ENCODE measurements at regions of chr2 and their contacts with region 1.

Region 1: GRCh38 chr2:96152301-96153165 is 7.3 kb upstream of the DUSP2 start:
- DNase-seq: no peak
- ATAC-seq: no peak
- H3K4me3 Mint-ChIP-seq: no peak overlapping the region
- H3K27ac Mint-ChIP-seq: peak overlapping the region; percentile 54
- H3K4me1 Mint-ChIP-seq: peaks cover 58% of the 10 kb centered on the region
- H3K27me3 Mint-ChIP-seq: peaks cover 6% of the 10 kb centered on the region

Region 2: GRCh38 chr2:96129528-96130120 is 22.9 kb before region 1 on chr2:
- POLR2A ChIA-PET with region 1: no interaction called
- DNase-seq: no peak
- ATAC-seq: no peak
- H3K4me3 Mint-ChIP-seq: no peak overlapping the region
- H3K27ac Mint-ChIP-seq: no peak overlapping the region
- H3K4me1 Mint-ChIP-seq: peaks cover 6% of the 10 kb centered on the region
- H3K27me3 Mint-ChIP-seq: no peaks in the 10 kb centered on the region

Region 3: GRCh38 chr2:96164459-96165184 is 12.1 kb after region 1 on chr2:
- POLR2A ChIA-PET with region 1: interaction called, 89 read pairs
- DNase-seq: peak; percentile 74
- ATAC-seq: peak; percentile 86
- H3K4me3 Mint-ChIP-seq: peak overlapping the region; percentile 80
- H3K27ac Mint-ChIP-seq: peak overlapping the region; percentile 99
- H3K4me1 Mint-ChIP-seq: peaks cover 36% of the 10 kb centered on the region
- H3K27me3 Mint-ChIP-seq: no peaks in the 10 kb centered on the region

Measured in activated naive CD8-positive, alpha-beta T cell treated with anti-CD3 and anti-CD28 coated beads, Interleukin-2, amount 10 ng/mL, durations not matched to agents 7 days and 5 days (primary cell).